ENCODE measurements at regions of chr20 and their contacts with region 1.

Region 1: DNA sequence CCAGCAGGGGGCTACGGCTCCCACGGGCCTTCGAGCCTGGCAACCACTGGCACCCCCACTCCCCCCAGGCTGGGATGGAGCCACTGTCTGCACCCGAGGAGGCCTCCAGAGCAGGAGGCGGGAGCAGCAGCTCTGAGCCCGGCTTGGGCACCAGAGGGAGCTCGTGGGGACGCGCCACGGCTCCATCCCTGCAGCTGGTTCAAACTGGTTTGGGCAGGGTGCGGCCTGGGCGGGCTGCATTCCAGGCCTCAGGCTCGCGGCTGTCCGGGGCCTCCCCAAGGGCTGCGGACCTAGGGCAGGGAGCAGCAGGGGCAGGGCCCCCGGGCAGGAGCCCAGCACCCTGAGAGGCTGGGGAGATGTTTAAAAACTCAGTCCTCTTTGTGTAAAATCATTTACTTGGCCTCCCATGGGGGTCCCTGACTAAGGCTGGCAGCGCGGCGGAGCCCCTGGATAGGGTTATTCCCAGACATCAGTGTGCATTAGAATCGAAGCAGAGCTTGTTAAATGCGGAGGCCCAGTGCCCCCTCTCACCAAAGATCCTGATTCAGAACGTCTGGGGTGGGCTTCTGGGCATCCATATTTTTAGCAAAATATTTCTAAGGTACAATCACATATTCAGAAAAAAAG is 4.1 kb upstream of the BCAS4 start:
- DNase-seq: peak; percentile 98
- H3K27ac ChIP-seq: peak overlapping the region; percentile 85
- CTCF ChIP-seq: peak; percentile 99

Region 2: DNA sequence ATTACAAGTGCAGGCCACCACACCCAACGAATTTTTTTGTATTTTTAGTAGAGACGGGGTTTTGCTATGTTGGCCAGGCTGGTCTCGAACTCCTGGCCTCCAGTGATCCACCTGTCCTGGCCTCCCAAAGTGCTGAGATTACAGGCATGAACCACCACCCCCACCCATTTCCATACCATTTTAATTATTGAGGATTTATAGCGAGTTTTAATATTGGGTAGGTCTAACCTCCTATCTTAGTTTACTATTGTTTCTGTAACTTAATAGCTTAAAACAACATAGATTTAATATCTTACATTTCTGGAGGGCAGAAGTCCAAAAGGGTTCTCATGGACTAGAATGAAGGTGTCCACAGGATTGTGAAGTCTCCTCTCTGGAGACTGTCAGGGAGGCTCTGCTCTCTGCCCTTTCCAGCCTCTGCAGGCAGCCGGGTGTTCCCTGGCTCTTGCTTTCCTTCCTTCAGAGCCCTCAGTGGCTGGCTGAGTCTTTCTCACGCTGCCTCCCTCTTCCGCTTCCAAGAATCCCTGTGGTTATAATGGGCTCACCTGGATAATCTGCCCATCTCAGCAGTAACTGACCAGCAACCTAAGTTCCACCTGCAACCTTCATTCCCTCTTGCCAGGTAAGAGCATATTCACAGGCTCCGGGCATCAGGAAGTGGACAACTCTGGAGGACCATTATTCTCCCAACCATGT is 14.5 kb before region 1 on chr20:
- CTCF ChIA-PET with region 1: interaction called, 10 read pairs
- POLR2A ChIA-PET with region 1: interaction called, 8 read pairs
- DNase-seq: no peak
- H3K27ac ChIP-seq: no peak overlapping the region
- CTCF ChIP-seq: no peak

Region 3: GRCh38 chr20:50895111-50895830 is 104.5 kb after region 1 on chr20:
- CTCF ChIA-PET with region 1: interaction called, 12 read pairs
- POLR2A ChIA-PET with region 1: no interaction called
- DNase-seq: no peak
- H3K27ac ChIP-seq: peak overlapping the region; percentile 4; the same call in 1 of the 2 replicates
- CTCF ChIP-seq: no peak

Region 4: GRCh38 chr20:50919567-50919966 is 128.8 kb after region 1 on chr20:
- CTCF ChIA-PET with region 1: interaction called, 20 read pairs
- POLR2A ChIA-PET with region 1: no interaction called
- DNase-seq: peak; percentile 98
- H3K27ac ChIP-seq: peak overlapping the region; percentile 74
- CTCF ChIP-seq: no peak

Region 5: DNA sequence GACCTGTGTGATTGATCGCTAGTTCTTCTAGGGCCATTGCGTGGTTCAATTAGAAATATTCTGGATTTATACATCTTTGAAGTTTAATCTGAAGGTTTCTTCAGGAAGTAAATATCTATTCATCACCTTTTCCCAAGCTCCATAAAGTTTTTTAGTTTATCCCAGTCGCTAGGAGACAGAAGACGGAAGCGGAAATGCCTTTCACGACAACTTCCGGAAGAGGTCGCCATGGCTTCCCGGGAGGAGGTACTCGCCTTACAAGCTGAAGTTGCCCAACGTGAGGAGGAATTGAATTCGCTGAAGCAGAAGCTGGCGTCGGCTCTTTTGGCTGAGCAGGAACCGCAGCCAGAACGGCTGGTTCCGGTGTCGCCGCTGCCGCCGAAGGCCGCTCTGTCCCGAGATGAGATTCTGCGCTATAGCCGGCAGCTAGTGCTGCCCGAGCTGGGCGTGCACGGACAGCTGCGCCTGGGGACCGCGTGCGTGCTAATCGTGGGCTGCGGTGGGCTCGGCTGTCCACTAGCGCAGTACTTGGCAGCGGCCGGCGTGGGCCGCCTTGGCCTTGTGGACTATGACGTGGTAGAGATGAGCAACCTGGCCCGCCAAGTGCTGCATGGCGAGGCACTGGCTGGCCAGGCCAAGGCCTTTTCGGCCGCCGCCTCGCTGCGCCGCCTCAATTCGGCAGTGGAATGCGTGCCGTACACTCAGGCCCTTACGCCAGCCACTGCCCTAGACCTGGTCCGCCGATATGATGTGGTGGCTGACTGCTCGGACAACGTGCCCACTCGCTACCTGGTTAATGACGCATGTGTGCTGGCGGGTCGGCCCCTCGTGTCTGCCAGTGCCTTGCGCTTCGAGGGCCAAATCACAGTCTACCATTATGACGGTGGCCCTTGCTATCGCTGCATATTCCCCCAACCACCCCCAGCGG is 168.1 kb after region 1 on chr20 and contains the start of gene MOCS3:
- CTCF ChIA-PET with region 1: interaction called, 11 read pairs
- POLR2A ChIA-PET with region 1: interaction called, 6 read pairs
- DNase-seq: peak; percentile 92
- H3K27ac ChIP-seq: peak within 1 kb of the TSS; percentile 80
- CTCF ChIP-seq: no peak

Region 6: DNA sequence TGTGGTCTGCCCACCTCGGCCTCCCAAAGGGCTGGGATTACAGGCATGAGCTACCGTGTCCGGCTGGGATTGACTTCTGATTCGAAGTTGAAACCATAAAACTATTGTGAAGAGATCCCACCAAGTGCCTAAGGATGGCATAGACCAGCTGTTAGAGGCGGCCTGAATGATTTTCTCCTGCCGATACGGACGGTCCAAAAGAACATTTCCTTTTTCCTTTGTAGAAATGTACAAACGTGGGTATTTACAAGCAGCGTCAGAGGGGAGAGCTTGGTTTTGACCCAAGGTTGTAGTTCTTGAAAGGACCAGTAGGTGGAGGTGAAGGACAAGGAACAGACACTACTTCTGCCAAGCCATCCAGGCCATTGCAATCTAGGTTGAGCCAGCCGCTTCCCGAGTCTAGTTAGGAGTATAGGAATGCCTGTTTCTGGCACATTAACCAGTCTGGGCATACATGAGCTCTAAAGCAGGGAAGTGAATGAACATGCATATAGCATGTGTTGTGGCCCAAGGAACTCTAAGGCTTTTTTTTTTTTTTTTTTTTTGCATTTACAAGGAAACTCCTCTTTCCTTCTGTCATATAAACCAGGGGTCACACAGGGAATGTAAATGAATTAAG is 196.9 kb after region 1 on chr20:
- CTCF ChIA-PET with region 1: interaction called, 20 read pairs
- POLR2A ChIA-PET with region 1: interaction called, 4 read pairs
- DNase-seq: peak; percentile 87
- H3K27ac ChIP-seq: no peak overlapping the region
- CTCF ChIP-seq: peak; percentile 98

Measured in RWPE1 (cell line).